AG04450 (cell line): ENCODE measurements at regions of chr4 and their contacts with region 1.

Region 1: DNA sequence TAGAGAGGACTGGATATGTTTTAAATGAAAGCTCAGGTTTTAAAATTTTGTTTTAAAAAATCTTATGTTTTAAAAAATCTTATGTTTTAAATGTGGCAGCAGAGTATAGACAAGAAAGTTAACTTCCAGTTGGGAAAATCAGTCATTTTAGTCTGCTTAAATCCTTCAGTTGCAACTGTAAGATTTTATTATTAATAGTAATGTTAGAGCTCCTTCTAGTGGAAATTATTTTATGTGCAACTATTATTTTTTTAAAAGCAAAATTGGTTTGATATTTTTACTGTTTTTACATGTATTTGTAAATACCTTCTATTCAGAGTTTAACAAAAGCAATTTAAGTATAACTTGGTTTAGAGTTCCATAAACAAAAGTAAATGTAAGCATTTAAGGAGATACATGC is 8.5 kb upstream of the NUDT6 start:
- DNase-seq: no peak
- H3K4me3 ChIP-seq: no peak overlapping the region
- H3K27ac ChIP-seq: no peak overlapping the region
- H3K27me3 ChIP-seq: no peaks in the 10 kb centered on the region
- CTCF ChIP-seq: peak; percentile 50

Region 2: DNA sequence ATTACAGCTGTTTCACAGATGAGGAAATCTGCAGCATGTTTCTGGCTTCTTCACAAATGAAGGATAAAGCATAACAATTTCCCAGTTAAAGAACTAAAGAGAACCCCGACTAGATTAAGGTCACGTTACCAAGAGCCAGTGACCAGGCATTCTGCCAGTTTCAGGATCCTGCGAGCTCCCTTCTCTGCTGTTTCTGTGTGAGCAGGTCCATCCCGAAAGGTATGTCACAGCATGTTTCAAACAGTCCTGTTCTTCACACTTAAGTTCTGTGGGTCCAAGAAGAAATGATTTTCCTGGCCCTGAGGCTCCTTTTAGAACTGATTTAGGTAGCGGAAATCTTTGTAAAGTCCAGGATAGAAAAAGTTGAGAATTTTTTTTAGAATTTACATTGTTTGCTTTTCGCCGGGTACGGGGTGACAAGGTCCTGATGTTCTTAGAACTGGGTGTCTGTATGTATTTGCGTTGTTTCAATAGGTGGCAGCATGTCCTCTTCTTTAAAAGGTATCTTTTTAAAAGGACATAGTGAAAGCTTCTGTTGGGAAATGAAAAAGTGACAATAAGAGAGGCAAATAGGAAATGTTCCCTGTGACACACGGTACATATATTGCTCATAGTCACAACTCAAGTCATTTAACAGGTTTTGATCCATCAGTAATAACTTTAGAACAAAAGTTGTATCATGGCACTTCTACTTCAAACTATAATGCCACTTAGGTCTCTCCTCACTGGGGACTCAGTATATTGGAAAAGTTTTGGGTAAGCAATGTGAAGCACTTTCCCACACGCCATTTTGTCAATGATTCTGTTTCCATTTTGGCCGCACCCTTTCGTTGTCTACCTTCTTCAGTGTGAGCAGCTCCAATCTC is 328.4 kb before region 1 on chr4:
- CTCF ChIA-PET with region 1: interaction called, 35 read pairs
- POLR2A ChIA-PET with region 1: no interaction called
- DNase-seq: no peak
- H3K4me3 ChIP-seq: no peak overlapping the region
- H3K27ac ChIP-seq: no peak overlapping the region
- H3K27me3 ChIP-seq: no peaks in the 10 kb centered on the region
- CTCF ChIP-seq: peak; percentile 50

Region 3: DNA sequence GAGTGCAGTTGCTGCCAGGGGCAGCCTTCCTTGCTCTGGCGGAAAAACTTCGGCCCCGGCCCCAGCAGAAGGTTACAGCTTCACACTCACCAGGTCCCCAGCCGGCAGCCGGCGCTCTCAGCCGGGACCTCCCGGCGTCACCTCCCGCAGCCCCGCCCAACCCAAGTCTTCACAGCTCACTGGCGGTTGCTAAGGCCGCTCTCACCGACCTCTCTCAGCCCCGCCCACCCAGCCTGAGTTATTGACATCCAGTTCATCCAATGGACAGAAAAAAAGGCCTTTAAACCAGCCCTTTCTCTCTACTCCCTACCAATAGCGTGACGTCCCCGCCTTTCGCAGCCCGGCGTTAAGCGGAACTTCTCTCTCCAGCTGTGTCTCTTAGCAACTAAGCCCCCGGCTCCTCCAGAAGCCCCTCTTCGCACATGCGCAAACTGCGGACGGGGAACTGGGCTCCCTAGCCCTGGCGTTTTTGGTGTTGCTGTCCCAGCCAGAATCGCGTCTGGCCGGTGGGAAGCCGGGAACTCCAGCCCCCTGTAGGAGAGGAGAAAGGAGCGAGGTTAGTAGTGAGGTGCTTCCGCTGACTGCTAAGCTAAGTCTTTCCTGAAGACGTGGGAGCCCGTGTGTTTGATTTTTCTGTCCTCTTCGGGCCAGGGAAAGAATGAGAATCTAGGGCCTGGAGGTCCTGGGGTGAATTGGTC is 198.4 kb before region 1 on chr4 and contains the start of gene BBS12:
- CTCF ChIA-PET with region 1: interaction called, 33 read pairs
- POLR2A ChIA-PET with region 1: no interaction called
- DNase-seq: peak; percentile 99
- H3K4me3 ChIP-seq: peak within 1 kb of the TSS; percentile 79
- H3K27ac ChIP-seq: peak within 1 kb of the TSS; percentile 62
- H3K27me3 ChIP-seq: no peaks in the 10 kb centered on the region
- CTCF ChIP-seq: peak; percentile 52
- polyA plus RNA-seq, gene BBS12: 2.2 and 3.2 TPM in 2 replicates

Region 4: GRCh38 chr4:122865425-122865824 is 65.4 kb before region 1 on chr4:
- CTCF ChIA-PET with region 1: no interaction called
- POLR2A ChIA-PET with region 1: no interaction called
- DNase-seq: no peak
- H3K4me3 ChIP-seq: no peak overlapping the region
- H3K27ac ChIP-seq: no peak overlapping the region
- H3K27me3 ChIP-seq: no peaks in the 10 kb centered on the region
- CTCF ChIP-seq: no peak

Region 5: GRCh38 chr4:122946142-122946541 is 15.3 kb after region 1 on chr4:
- CTCF ChIA-PET with region 1: no interaction called
- POLR2A ChIA-PET with region 1: no interaction called
- DNase-seq: no peak
- H3K4me3 ChIP-seq: no peak overlapping the region
- H3K27ac ChIP-seq: no peak overlapping the region
- H3K27me3 ChIP-seq: no peaks in the 10 kb centered on the region
- CTCF ChIP-seq: no peak